GM10248 (cell line): ENCODE measurements at regions of chr10 and their contacts with region 1.

Region 1: DNA sequence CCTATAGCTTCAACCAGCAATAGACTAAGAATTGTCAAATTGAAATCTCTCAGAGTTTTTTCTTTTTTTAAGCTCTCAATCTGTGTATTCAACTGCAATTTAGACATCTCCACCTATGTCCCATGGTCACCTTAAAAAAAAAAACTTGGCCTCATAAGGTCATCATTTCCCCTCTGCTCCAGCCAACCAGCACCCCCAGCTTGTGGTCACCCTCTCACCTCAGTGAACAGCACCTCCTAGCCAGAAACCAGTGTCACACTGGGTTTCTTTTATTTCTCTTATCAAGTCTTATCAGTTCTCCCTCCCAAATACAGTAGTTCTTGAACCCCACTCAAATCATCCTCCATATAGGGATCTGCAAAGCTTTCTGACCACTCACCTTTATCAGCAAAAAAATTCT is 4.0 kb downstream of the ITGB1 start:
- DNase-seq: peak; percentile 20
- CTCF ChIP-seq: peak; percentile 19

Region 2: GRCh38 chr10:32938554-32939061 is 15.5 kb before region 1 on chr10:
- CTCF ChIA-PET with region 1: interaction called, 12 read pairs
- POLR2A ChIA-PET with region 1: no interaction called
- DNase-seq: no peak
- CTCF ChIP-seq: no peak

Region 3: GRCh38 chr10:32943854-32944661 is 10.0 kb before region 1 on chr10:
- CTCF ChIA-PET with region 1: interaction called, 12 read pairs
- POLR2A ChIA-PET with region 1: no interaction called
- DNase-seq: no peak
- CTCF ChIP-seq: no peak